ENCODE measurements at regions of chr17 and their contacts with region 1.

Region 1: DNA sequence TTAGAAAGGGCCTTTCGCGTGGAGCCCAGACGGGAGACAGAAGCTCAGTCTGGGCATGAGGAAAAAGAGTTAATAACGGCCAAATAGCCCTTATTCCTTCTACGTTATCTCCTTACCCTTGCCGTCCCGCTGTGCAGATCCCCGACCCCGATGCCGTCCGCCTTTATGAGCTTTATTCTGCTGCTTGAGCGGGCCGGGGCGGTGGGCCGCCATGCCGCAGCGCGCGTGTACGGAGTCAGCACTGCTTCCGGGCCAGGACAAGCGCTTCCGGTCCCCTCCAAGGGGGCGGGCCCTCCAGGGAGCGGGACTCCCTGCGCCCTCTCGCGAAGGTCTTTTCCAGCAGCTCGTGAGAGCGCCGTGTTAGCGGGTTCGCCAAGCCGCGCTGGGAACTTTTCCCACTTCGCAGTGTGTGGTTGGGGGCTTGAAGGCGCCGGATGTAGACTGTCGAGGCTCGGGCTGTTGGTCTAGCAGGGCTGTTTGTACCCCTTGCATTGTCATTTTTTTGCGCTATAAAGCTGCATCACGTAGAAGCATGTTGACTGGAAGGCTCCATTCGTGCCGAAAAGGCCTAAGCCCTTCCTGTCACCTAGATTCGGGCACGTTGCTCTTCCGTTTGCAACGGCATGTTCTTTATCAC is at the start of gene TSR1:
- DNase-seq: peak; percentile 86
- H3K4me3 ChIP-seq: peak within 1 kb of the TSS; percentile 67 to 89 (median 87)
- H3K27ac ChIP-seq: peak within 1 kb of the TSS; percentile 83
- H3K4me1 ChIP-seq: peaks cover 21% of the 10 kb centered on the region
- H3K27me3 ChIP-seq: no peaks in the 10 kb centered on the region
- CTCF ChIP-seq: peak in 1 of 2 donors; percentile 45
- total RNA-seq, gene TSR1: 51.0 to 51.5 TPM

Region 2: DNA sequence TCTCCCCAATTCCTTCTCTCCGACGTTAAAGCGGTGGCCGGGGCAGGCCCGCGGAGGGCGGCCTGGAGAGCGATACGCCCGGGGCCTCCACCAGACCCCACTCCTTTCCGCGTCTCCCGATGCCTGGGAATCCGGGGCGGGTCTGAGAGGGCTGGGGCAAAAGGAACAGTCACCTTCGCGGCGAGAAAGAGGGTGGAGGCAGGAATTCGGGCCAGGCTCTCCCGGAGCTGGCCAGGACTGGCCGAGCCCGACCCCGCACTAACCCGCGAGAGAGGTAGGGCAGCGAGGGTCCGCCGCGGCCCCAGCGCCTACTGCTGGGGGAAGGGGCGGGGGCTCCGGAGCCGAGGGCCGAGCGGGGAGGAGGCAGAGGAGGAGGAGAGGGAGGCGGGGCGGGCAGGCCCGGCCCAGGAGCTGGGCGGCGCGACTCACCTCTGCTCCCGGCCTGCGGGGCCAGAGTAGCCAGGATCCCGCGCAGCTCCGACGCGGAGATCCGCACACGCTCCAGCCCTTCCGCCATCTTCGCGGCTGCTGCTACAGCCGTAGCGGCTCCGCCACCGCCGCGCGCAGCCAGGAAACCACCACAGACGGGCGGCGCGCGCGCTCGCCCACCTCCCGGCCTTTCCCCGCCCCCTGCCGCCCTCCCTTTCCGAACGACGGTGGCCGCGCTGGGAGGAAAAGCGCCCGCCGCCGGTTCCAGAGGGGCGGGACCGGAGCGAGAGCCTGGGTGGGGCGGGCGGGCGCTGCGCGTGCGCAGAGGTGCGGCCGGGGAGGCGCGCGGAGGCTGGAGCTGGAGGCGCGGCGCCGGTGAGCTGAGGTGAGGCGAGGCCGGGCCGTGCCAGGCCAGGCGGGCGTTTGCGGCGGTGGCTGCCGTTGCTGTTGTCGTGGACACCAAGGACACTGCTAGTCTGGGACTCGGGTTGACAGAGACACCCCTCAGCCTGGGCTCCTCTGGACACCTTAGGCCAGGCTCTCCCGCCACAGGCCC is 32.8 kb before region 1 on chr17 and contains the starts of genes SMG6 and SRR:
- CTCF ChIA-PET with region 1: no interaction called
- dilution Hi-C with region 1: no loop called
- in situ Hi-C with region 1: no loop called
- intact Hi-C with region 1: loop called (anchors 1 kb)
- DNase-seq: peak; percentile 92
- H3K4me3 ChIP-seq: peak within 1 kb of the TSS; percentile 92 to 99 (median 96)
- H3K27ac ChIP-seq: peak within 1 kb of the TSS; percentile 85
- H3K4me1 ChIP-seq: peaks cover 16% of the 10 kb centered on the region
- H3K27me3 ChIP-seq: no peaks in the 10 kb centered on the region
- CTCF ChIP-seq: no peak
- total RNA-seq, gene SMG6: 22.8 to 27.7 TPM
- total RNA-seq, gene SRR: 9.8 to 18.5 TPM

Region 3: GRCh38 chr17:2319051-2319450 is 17.3 kb before region 1 on chr17:
- CTCF ChIA-PET with region 1: no interaction called
- dilution Hi-C with region 1: no loop called
- in situ Hi-C with region 1: no loop called
- intact Hi-C with region 1: loop called (anchors 1 kb)
- DNase-seq: no peak
- H3K4me3 ChIP-seq: no peak overlapping the region
- H3K27ac ChIP-seq: no peak overlapping the region
- H3K4me1 ChIP-seq: no peaks in the 10 kb centered on the region
- H3K27me3 ChIP-seq: no peaks in the 10 kb centered on the region
- CTCF ChIP-seq: no peak

Region 4: GRCh38 chr17:2347547-2348307 is 11.4 kb after region 1 on chr17:
- CTCF ChIA-PET with region 1: interaction called, 4 read pairs
- dilution Hi-C with region 1: no loop called
- in situ Hi-C with region 1: no loop called
- intact Hi-C with region 1: loop called (anchors 2 kb)
- DNase-seq: peak; percentile 42
- H3K4me3 ChIP-seq: no peak overlapping the region
- H3K27ac ChIP-seq: no peak overlapping the region
- H3K4me1 ChIP-seq: peaks cover 4% of the 10 kb centered on the region
- H3K27me3 ChIP-seq: no peaks in the 10 kb centered on the region
- CTCF ChIP-seq: no peak

Region 5: GRCh38 chr17:2363851-2364762 is 27.8 kb after region 1 on chr17:
- CTCF ChIA-PET with region 1: no interaction called
- dilution Hi-C with region 1: no loop called
- in situ Hi-C with region 1: no loop called
- intact Hi-C with region 1: no loop called
- DNase-seq: no peak
- H3K4me3 ChIP-seq: no peak overlapping the region
- H3K27ac ChIP-seq: no peak overlapping the region
- H3K4me1 ChIP-seq: peaks cover 12% of the 10 kb centered on the region
- H3K27me3 ChIP-seq: no peaks in the 10 kb centered on the region
- CTCF ChIP-seq: no peak

Region 6: DNA sequence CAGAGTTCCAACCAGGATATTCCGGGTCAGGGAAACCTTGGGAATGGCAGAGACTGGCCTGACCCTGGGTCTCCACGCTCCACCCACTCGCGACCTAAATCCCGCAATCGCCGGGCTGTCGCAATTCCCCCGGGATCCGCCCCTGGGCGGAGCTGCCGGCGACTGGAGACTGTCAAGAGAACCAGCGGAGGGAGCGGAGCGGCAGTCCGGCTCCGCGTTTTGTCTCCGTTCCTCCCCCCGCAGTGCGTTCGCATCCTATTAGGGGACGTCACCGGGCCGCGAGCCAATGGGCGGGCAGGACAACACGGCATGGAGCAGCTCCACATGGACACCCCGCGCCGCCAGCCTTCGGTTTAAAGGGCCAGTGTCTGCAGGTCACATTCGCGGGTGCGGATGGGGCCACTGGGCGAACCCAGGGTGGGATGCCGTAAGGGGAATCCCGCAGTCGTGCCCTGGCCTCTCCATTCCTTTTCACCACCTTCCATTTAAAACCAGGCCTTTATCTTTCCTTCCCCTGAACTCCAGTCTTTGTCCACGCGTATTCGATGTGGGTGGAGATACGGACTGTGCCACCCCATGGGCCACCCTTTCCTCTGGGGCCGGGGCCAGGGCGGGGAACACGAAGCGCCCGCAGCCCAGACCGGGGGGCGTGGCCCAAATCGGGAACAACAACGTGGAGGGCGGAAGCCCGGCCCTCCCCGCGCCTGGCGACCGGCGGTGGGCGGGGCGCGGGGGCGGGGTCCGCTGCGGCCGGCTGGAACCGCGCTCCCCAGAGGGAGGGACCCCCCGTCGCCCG is 65.3 kb after region 1 on chr17:
- CTCF ChIA-PET with region 1: no interaction called
- dilution Hi-C with region 1: no loop called
- in situ Hi-C with region 1: no loop called
- intact Hi-C with region 1: loop called (anchors 5 kb)
- DNase-seq: peak; percentile 99
- H3K4me3 ChIP-seq: peak overlapping the region; percentile 51 to 66 (median 66)
- H3K27ac ChIP-seq: peak overlapping the region; percentile 98
- H3K4me1 ChIP-seq: peaks cover 64% of the 10 kb centered on the region
- H3K27me3 ChIP-seq: no peaks in the 10 kb centered on the region
- CTCF ChIP-seq: no peak